Heart left ventricle (tissue), 16 donors: ENCODE measurements at regions of chr3 and their contacts with region 1.

Region 1: DNA sequence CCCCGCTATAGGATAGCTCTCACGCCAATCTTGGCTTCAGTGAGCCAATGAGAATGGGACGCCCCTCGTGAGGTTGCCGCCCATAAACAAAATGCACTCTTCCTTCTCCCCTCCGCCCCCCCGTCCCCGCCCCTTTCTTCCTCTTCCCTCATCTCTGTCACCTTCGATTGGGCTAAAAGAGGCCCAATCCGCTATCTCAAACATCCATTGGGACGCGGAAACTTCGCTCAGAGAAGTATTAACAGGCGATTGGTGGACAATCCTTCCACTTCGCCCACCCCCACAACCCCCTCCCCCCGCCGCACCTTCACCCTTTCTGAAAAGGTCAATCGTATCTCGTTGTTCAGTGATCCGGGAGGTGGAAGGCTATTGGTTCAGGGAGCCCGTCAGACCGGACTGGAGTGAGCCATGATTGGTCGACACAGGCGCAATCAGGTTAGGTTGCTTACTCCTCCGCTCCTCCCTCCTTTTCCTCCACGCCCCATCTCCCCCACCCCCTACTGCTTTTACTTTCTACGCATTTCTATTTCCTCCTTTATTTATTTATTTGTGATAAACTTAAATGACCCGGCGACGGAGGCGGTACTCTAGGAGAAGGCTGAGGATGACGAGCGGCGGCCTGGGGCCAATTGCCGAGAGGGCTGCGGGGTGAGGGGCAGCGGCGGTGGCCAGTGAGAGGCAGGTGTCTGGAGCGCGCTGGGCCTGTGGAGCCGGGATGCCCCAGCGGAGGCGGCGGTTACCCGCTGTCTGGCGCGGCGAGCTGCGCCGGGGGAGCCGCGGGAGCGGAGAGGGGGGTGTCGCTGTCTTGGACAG is 447 bp upstream of the ZBTB20 start:
- DNase-seq: peak; percentile 98 to 99 (median 99)
- ATAC-seq: peak; percentile 90 to 95 (median 94)
- H3K4me3 ChIP-seq: peak overlapping the region; percentile 50 to 98 (median 86)
- H3K27ac ChIP-seq: peak overlapping the region; percentile 96 to 100 (median 98)
- H3K4me1 ChIP-seq: peaks cover 0 to 27% (median 12%) of the 10 kb centered on the region in 12 donors
- H3K27me3 ChIP-seq: no peaks in the 10 kb centered on the region
- CTCF ChIP-seq: no peak
- POLR2A ChIP-seq: peak; percentile 60 to 87

Region 2: DNA sequence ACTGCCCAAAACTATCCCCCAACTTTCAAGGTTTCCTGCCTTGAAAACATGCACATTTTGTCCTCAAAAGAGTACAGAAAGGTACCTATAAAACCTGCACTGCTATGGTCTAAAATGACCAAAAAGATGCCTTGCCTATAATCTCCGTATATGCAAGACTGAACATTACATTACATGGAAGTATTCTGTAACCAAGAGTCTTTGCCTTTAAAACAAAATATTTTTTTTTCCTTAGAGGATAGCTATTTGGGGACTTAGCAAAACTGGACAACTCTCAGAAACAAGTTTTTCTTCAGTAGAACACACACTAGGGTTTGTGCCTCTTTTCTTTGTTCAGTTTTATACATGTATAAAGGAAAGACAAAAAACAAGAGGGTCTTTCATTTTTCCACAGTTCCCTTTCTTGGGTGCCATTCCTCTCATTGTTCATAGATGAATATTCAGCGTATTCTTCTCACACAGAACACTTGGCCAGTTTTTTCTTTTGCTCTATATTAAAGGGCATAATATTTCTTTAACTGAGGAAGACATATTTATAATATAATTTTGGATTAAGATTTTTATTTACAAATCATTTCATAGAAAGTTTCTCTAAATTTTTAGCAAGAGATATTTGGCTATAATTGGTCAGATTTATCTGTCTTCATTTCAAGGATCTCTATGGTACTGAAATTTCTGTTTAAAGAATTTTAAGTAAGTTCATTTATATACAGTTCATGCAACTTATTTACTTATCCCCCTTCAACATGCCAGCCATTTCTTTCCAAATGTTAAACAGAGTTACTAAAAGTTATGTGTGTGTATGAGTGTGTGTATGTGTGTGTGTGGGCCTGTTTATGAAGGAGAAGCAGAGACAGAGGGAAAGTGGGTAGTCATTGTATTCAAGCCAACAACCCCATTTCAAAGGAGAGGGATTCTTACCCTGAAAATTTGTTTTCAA is 143.1 kb before region 1 on chr3:
- intact Hi-C with region 1: no loop called
- DNase-seq: no peak
- ATAC-seq: no peak
- H3K4me3 ChIP-seq: no peak overlapping the region
- H3K27ac ChIP-seq: no peak overlapping the region
- H3K4me1 ChIP-seq: no peaks in the 10 kb centered on the region
- H3K27me3 ChIP-seq: no peaks in the 10 kb centered on the region
- CTCF ChIP-seq: no peak
- POLR2A ChIP-seq: no peak

Region 3: DNA sequence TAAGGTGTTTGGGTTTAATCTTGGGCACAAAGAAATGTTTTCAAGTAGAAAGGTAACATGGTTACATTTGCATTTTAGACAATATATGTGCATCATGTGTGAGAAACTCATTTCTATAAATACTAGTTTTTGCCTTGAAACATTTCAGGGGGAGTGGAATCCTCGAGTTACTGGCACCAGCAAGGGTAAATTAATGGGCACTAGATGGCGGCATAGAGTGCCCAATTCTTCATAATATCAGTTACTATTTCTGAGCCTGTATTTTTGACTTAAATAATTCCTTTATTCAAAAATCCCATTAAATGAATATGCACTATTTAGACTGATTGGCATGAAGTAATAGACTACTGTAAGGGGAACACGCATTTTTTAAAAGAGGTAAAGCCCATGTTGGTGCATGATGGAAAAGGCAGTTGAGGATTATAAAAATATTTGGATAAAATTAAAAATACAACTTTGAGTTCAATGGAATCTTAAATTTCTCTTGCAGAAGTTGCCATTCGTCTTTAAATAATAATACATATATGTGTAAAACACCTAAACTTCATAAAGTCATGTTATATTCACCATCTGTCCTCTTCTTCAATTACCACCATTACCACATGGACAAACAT is 106.8 kb before region 1 on chr3:
- intact Hi-C with region 1: loop called in 1 of 10 experiments (anchors 10 kb)
- DNase-seq: peak in 2 of 5 donors; percentile 8 to 26
- ATAC-seq: peak in 1 of 4 donors; percentile 41
- H3K4me3 ChIP-seq: no peak overlapping the region
- H3K27ac ChIP-seq: no peak overlapping the region
- H3K4me1 ChIP-seq: peaks cover 0 to 23% (median 4%) of the 10 kb centered on the region in 12 donors
- H3K27me3 ChIP-seq: no peaks in the 10 kb centered on the region
- CTCF ChIP-seq: peak; percentile 41 to 72 (median 61)
- POLR2A ChIP-seq: no peak

Region 4: GRCh38 chr3:115099986-115100571 is 47.5 kb before region 1 on chr3:
- intact Hi-C with region 1: loop called in 9 of 10 experiments (anchors 2 to 5 kb)
- DNase-seq: peak in 2 of 5 donors; percentile 26 to 31
- ATAC-seq: peak; percentile 83 to 95 (median 90)
- H3K4me3 ChIP-seq: peak overlapping the region; percentile 6 to 56 (median 50)
- H3K27ac ChIP-seq: peak overlapping the region; percentile 50 to 83 (median 69)
- H3K4me1 ChIP-seq: peaks cover 0 to 57% (median 29%) of the 10 kb centered on the region in 12 donors
- H3K27me3 ChIP-seq: no peaks in the 10 kb centered on the region
- CTCF ChIP-seq: peak in 1 of 12 donors; percentile 7
- POLR2A ChIP-seq: no peak

Region 5: GRCh38 chr3:115720983-115721382 is 573.4 kb after region 1 on chr3:
- intact Hi-C with region 1: no loop called
- DNase-seq: no peak
- ATAC-seq: peak in 1 of 4 donors; percentile 39
- H3K4me3 ChIP-seq: no peak overlapping the region
- H3K27ac ChIP-seq: no peak overlapping the region
- H3K4me1 ChIP-seq: no peaks in the 10 kb centered on the region
- H3K27me3 ChIP-seq: no peaks in the 10 kb centered on the region
- CTCF ChIP-seq: no peak
- POLR2A ChIP-seq: no peak